Upper lobe of right lung (tissue), 1 donor: ENCODE measurements at regions of chr16 and their contacts with region 1.

Region 1: GRCh38 chr16:55842369-55843104 is 9.6 kb upstream of the CES1 start:
- DNase-seq: no peak
- ATAC-seq: peak; percentile 80
- H3K4me3 ChIP-seq: no peak overlapping the region
- H3K27ac ChIP-seq: no peak overlapping the region
- H3K4me1 ChIP-seq: no peaks in the 10 kb centered on the region
- H3K27me3 ChIP-seq: peaks cover 11% of the 10 kb centered on the region
- CTCF ChIP-seq: peak; percentile 70

Region 2: DNA sequence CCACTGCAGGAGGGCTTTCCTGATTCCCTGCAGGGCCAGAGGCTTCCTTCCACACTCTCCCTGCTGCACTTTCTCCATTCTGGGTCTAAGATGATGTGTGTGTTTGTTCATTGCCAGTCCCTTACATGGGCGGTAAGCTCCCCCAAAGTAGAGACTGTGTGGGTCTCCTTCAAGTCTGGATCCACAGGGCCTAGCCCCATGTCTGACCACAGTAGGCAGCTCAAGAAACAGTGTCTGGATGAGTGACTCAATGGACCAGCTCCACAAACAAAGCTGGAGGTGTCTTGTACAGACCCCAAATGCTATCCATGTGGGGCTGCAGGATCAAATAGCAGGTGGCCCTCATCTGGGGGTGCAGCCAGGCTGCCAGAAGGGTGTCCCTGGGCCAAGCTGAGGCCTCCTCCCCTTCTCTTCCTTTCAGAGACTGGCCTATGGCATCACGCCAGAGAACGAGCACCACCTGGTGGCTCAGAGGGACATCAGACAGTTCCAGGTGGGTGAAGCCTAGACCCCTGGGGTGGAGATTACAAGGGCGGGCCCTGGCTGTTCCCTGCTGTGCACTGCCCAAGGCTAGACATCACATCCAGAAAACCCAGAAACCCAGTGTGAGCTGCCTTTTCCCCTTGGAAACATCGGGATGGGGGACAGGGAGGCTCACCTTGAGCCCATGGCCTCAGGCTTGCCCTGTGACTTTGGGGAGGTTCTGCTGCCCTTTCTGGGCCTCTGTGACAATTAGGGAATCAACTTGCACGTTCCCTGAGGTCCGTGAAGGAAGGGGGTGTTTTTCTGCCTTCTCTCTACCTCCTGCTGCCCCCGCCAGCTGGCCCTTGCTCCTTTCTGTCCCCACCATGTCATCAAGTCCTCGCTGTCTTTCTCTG is 140.9 kb before region 1 on chr16:
- intact Hi-C with region 1: no loop called
- DNase-seq: peak; percentile 82
- ATAC-seq: peak; percentile 81
- H3K4me3 ChIP-seq: no peak overlapping the region
- H3K27ac ChIP-seq: no peak overlapping the region
- H3K4me1 ChIP-seq: no peaks in the 10 kb centered on the region
- H3K27me3 ChIP-seq: no peaks in the 10 kb centered on the region
- CTCF ChIP-seq: peak; percentile 60

Region 3: GRCh38 chr16:55711959-55712876 is 130.3 kb before region 1 on chr16:
- intact Hi-C with region 1: loop called (anchors 5 kb)
- DNase-seq: peak; percentile 71
- ATAC-seq: peak; percentile 91
- H3K4me3 ChIP-seq: no peak overlapping the region
- H3K27ac ChIP-seq: no peak overlapping the region
- H3K4me1 ChIP-seq: no peaks in the 10 kb centered on the region
- H3K27me3 ChIP-seq: no peaks in the 10 kb centered on the region
- CTCF ChIP-seq: peak; percentile 72